H1 (cell line): ENCODE measurements at regions of chr2 and their contacts with region 1.

Region 1: GRCh38 chr2:50885948-50886347 is 146.0 kb downstream of the NRXN1 start:
- DNase-seq: no peak
- H3K4me3 ChIP-seq: no peak overlapping the region
- H3K27ac ChIP-seq: no peak overlapping the region
- H3K4me1 ChIP-seq: no peaks in the 10 kb centered on the region
- H3K27me3 ChIP-seq: no peaks in the 10 kb centered on the region
- CTCF ChIP-seq: no peak
- EP300 ChIP-seq: no peak
- POLR2A ChIP-seq: no peak
- RAD21 ChIP-seq: no peak

Region 2: DNA sequence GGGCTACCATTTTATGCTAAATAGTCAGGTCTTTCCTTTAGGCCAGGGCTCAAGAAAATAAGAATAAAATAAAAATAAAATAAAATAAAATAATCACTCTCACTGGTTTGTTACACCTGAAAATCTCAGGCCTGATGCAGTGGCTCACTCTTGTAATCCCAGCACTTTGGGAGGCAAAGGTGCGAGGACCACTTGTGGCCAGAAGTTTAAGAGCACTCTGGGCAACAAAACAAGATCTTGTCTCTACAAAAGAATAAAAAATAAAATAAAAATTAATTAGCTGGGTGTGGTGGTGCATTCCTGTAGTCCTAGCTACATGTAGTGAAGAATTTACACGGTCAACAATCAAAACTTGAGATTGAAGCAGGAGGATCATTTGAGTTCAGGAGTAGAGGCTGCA is 13.4 kb before region 1 on chr2:
- CTCF ChIA-PET with region 1: interaction called, 10 read pairs
- POLR2A ChIA-PET with region 1: no interaction called
- DNase-seq: no peak
- H3K4me3 ChIP-seq: no peak overlapping the region
- H3K27ac ChIP-seq: no peak overlapping the region
- H3K4me1 ChIP-seq: no peaks in the 10 kb centered on the region
- H3K27me3 ChIP-seq: no peaks in the 10 kb centered on the region
- CTCF ChIP-seq: peak; percentile 20 to 44 (median 36); a peak in 3 of 4 replicates
- EP300 ChIP-seq: no peak
- POLR2A ChIP-seq: no peak
- RAD21 ChIP-seq: peak; percentile 41 to 58